AG04449 (cell line): ENCODE measurements at regions of chr20 and their contacts with region 1.

Region 1: DNA sequence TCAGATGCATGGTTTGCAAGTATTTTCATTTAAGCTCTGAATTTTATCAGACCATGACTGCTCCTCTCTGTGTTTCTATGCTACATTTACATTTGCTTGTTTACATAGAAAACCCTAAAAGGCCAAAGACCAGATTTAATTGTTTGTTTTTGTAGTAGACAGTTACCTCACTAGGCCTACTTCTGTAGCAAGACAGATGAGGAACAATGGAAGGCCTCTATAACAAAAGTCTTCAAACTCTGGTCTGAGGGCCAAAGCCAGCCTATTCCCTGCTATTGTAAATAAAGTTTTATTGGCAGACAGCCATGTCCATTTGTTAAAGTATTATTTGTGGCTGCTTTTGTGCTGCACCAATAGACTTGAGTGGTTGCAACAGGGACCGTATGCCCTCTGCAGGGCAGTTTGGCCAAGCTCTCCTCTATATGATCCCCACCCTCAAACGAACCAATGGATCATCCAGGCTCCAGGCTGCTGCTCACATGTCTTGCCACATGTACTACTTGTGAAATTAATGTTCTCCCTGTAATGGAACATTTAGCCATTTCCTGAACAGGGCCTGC is 182.0 kb downstream of the DOK5 start:
- DNase-seq: no peak
- H3K4me3 ChIP-seq: no peak overlapping the region
- CTCF ChIP-seq: no peak

Region 2: DNA sequence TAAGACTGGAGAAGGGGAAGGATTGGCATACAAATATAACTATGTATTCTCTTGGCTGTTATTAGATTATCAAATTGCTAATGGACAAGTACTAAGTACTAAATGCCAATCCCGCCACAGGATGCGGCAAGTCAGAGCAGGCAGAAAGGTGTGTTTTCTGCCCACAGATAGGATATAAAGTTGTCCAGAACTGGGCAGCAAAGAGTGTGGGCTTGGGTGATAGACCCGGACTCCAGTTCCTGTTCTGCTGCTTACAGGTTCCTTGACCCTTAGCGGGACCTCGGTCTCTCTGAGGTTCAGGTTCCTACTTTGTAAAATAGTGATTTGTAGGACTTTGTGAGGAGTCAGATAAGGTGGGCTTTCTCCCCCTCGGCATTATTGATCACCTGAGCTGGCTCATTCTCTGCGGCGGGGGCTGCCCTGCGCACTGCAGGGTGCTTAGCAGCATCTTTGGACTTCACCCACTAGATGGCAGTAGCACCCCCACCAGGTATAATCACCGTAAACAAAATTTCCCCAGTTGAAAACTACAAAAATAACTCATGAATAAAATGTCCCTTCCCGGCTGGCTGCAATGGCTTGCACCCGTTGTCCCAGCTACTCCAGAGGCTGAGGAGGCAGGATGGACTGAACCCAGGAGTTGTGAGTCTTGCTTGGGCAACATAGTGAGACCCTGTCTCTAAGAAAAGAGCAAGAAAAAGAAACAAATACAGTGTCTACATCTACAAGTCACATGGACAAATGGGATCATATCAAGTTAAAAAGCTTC is 11.1 kb after region 1 on chr20:
- CTCF ChIA-PET with region 1: interaction called, 26 read pairs
- POLR2A ChIA-PET with region 1: no interaction called
- DNase-seq: no peak
- H3K4me3 ChIP-seq: no peak overlapping the region
- CTCF ChIP-seq: peak; percentile 63

Region 3: DNA sequence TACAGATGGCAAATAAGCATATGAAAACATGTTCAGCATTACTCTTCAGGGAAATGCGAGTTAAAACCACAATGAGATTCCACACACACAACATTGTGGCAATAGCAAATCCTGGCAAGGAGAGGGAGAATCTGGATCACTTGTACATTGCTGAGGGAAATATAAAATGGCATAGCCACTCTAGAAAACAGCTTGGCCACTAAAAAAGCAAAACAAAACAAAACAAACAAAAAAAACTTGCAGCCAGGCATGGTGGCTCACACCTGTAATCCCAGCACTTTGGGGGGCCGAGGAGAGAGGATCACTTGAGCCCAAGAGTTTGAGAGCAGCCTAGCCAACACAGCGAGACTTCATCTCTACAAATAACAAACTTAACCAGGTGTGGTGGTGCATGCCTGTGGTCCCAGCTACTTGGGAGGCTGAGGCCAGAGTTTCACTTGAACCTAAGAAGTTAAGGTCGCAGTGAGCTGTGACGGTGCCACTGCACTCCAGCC is 103.2 kb after region 1 on chr20:
- CTCF ChIA-PET with region 1: no interaction called
- POLR2A ChIA-PET with region 1: no interaction called
- DNase-seq: no peak
- H3K4me3 ChIP-seq: no peak overlapping the region
- CTCF ChIP-seq: no peak

Region 4: GRCh38 chr20:55069951-55070350 is 412.6 kb after region 1 on chr20:
- CTCF ChIA-PET with region 1: no interaction called
- POLR2A ChIA-PET with region 1: no interaction called
- DNase-seq: no peak
- H3K4me3 ChIP-seq: no peak overlapping the region
- CTCF ChIP-seq: no peak